Spleen (tissue), 13 donors: ENCODE measurements at regions of chr9 and their contacts with region 1.

Region 1: DNA sequence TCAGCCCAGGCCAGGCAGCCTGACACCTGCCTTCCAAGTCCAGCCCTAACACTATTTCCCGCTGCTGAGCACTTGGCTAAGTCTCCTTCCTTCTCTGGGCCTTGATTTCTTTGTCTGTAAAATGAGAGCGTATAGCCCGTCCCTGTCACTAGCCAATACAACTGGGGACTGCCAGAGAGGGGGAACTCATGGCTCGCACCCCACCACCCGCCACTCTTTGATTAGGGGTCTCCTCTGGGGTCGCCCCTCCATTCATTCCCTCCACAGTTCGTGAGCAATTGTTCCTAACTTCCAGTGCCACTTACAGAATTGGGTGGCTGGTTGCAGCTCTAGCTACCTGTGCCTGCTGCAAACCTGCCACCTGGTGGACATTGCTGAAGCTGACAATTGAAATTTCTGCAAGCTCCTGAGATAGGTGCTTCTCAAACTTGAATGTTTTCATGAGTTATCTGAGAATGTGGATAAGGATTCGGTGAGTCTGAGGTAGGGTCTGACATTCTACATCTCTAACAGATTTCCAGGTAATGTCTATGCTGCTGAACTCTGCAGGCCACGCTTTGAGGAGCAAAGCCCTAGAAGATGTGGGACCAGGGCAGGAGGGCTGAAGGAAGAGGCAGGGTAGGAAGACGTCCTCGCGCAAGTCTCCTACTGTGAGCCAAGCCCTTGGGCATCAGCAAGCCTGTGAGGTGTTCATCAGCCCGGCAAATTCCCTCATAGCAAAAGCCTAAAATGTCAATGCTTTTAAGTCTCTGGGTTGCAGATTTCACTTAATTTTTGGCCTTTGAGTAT is 13.3 kb upstream of the RECK start:
- DNase-seq: peak; percentile 82
- H3K4me3 ChIP-seq: no peak overlapping the region
- H3K27ac ChIP-seq: no peak overlapping the region
- H3K4me1 ChIP-seq: no peaks in the 10 kb centered on the region
- H3K27me3 ChIP-seq: no peaks in the 10 kb centered on the region
- CTCF ChIP-seq: peak in 10 of 11 experiments; percentile 52 to 81 (median 68)
- POLR2A ChIP-seq: no peak

Region 2: GRCh38 chr9:35801328-35802128 is 221.9 kb before region 1 on chr9:
- intact Hi-C with region 1: loop called (anchors 10 kb)
- DNase-seq: no peak
- H3K4me3 ChIP-seq: no peak overlapping the region
- H3K27ac ChIP-seq: no peak overlapping the region
- H3K4me1 ChIP-seq: no peaks in the 10 kb centered on the region
- H3K27me3 ChIP-seq: no peaks in the 10 kb centered on the region
- CTCF ChIP-seq: no peak
- POLR2A ChIP-seq: no peak

Region 3: GRCh38 chr9:35903049-35903448 is 120.4 kb before region 1 on chr9:
- intact Hi-C with region 1: loop called (anchors 10 kb)
- DNase-seq: no peak
- H3K4me3 ChIP-seq: no peak overlapping the region
- H3K27ac ChIP-seq: no peak overlapping the region
- H3K4me1 ChIP-seq: peaks cover 32 to 54% (median 48%) of the 10 kb centered on the region in 6 donors
- H3K27me3 ChIP-seq: peaks cover 0 to 22% (median 0%) of the 10 kb centered on the region in 7 donors
- CTCF ChIP-seq: peak; percentile 50 to 82 (median 66)
- POLR2A ChIP-seq: no peak

Region 4: DNA sequence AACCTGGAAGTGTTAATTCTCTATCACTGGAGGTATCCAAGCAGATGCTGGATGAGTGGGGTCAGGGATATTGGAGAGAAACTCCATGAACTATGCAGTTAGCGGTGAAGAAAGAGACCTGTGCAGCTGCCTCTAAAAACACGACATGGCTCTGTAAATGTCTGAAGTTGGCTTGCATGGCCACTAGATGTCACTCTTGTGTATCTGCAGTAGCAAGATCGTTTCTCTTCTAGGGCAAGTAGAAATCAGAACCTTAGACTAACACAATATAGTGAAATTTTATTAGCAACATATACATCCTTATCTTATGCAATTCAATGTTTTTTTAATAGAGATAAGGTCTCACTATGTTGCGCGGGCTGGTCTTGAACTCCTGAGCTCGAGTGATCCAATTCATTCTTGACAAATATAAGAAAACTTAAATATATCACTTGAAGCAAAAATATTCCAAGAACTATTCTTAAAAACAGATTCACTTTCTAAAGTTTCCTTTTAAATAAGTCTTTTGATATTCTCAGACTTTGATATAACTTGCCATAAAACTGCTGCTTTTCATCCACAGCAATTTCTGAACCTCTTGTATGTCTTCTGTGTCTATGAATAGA is 68.4 kb before region 1 on chr9:
- intact Hi-C with region 1: loop called (anchors 5 kb)
- DNase-seq: no peak
- H3K4me3 ChIP-seq: no peak overlapping the region
- H3K27ac ChIP-seq: no peak overlapping the region
- H3K4me1 ChIP-seq: peaks cover 0 to 8% (median 5%) of the 10 kb centered on the region in 6 donors
- H3K27me3 ChIP-seq: peaks cover 0 to 38% (median 0%) of the 10 kb centered on the region in 7 donors
- CTCF ChIP-seq: peak; percentile 28 to 82 (median 75)
- POLR2A ChIP-seq: no peak